Caco-2 (cell line): ENCODE measurements at regions of chr19 and their contacts with region 1.

Region 1: GRCh38 chr19:45558399-45558878 is 26.2 kb downstream of the OPA3 start:
- DNase-seq: peak; percentile 61 to 70
- H3K4me3 ChIP-seq: no peak overlapping the region
- H3K4me3 Mint-ChIP-seq: no peak overlapping the region
- H3K27ac Mint-ChIP-seq: no peak overlapping the region
- H3K4me1 ChIP-seq: no peaks in the 10 kb centered on the region
- H3K4me1 Mint-ChIP-seq: peaks cover 14% of the 10 kb centered on the region
- H3K27me3 ChIP-seq: no peaks in the 10 kb centered on the region
- H3K27me3 Mint-ChIP-seq: no peaks in the 10 kb centered on the region
- CTCF ChIP-seq: peak; percentile 63 to 80

Region 2: GRCh38 chr19:45528651-45529419 is 29.6 kb before region 1 on chr19:
- CTCF ChIA-PET with region 1: interaction called, 12 read pairs
- POLR2A ChIA-PET with region 1: no interaction called
- intact Hi-C with region 1: loop called (anchors 1 kb)
- DNase-seq: peak; percentile 88 to 92
- H3K4me3 ChIP-seq: peak overlapping the region; percentile 63
- H3K4me3 Mint-ChIP-seq: peak overlapping the region; percentile 85
- H3K27ac Mint-ChIP-seq: peak overlapping the region; percentile 55
- H3K4me1 ChIP-seq: 0 out of 2 replicates have a peak, but pooled peaks cover 8% of the 10 kb centered on the region
- H3K4me1 Mint-ChIP-seq: peaks cover 10% of the 10 kb centered on the region
- H3K27me3 ChIP-seq: no peaks in the 10 kb centered on the region
- H3K27me3 Mint-ChIP-seq: no peaks in the 10 kb centered on the region
- CTCF ChIP-seq: peak in 1 of 2 experiments; percentile 24

Region 3: DNA sequence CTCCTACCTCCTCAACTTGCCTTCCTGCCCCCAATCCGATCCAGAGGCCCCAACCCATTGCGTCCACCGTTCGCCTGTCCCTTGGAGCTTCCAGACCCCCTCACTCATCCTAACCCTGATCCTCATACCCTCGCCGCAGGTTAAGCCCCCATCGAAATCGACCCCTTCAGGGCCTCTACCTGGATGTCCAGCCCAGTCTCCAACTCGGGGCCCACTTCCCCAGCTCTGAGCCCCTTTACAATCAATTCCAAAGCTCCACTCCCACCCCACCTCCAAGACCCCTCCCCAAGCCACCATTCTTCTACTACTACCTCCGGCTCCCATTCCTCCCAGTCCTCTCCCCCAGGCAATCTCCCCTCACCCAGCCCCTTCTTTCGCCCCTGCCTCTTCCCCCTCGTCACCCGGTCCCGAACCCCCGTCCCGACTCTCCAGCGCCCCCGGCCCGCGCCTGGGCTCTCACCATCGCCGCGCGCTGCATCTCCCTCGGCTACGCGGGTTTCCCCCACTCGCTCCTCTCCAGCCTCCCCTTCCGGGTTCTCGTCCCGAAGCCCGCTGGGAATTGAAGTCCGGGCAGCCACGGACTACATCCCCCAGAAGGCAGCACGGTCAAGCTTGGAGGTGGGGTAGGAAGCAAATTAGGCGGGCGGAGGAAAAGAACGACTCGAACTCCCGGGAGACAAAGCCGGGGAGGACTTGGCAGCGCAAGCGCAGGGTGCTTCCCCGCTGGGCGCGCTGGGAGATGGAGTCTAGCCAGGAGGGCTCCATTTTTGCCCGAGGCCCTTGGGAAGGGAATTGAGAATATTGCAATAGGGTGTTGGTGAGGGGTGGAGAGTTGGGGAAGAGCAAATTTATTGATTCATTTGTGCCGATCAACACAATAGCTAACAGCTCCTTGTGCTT is 172.2 kb after region 1 on chr19 and contains the start of gene FBXO46:
- CTCF ChIA-PET with region 1: no interaction called
- POLR2A ChIA-PET with region 1: no interaction called
- intact Hi-C with region 1: no loop called
- DNase-seq: peak; percentile 97 to 99
- H3K4me3 ChIP-seq: peak within 1 kb of the TSS; percentile 57
- H3K4me3 Mint-ChIP-seq: peak within 1 kb of the TSS; percentile 86
- H3K27ac Mint-ChIP-seq: peak within 1 kb of the TSS; percentile 73
- H3K4me1 ChIP-seq: peaks cover under 1% of the 10 kb centered on the region
- H3K4me1 Mint-ChIP-seq: peaks cover 8% of the 10 kb centered on the region
- H3K27me3 ChIP-seq: no peaks in the 10 kb centered on the region
- H3K27me3 Mint-ChIP-seq: no peaks in the 10 kb centered on the region
- CTCF ChIP-seq: peak in 1 of 2 experiments; percentile 44
- total RNA-seq, gene FBXO46: 31.0 and 37.0 TPM in 2 replicates